Activated B cell treated with CpG ODN at 0.5 μM for 24 hours (primary cell): ENCODE measurements at regions of chr12 and their contacts with region 1.

Region 1: GRCh38 chr12:31874961-31875608 is 84.1 kb upstream of the RESF1 start:
- DNase-seq: peak; percentile 45
- ATAC-seq: peak; percentile 85
- H3K4me3 Mint-ChIP-seq: peak overlapping the region; percentile 77
- H3K27ac Mint-ChIP-seq: peak overlapping the region; percentile 100
- H3K4me1 Mint-ChIP-seq: peaks cover 77% of the 10 kb centered on the region
- H3K27me3 Mint-ChIP-seq: no peaks in the 10 kb centered on the region
- CTCF ChIP-seq: no peak

Region 2: GRCh38 chr12:31804185-31804504 is 70.9 kb before region 1 on chr12:
- CTCF ChIA-PET with region 1: no interaction called
- POLR2A ChIA-PET with region 1: interaction called, 15 read pairs
- intact Hi-C with region 1: no loop called
- DNase-seq: no peak
- ATAC-seq: no peak
- H3K4me3 Mint-ChIP-seq: peak overlapping the region; percentile 78
- H3K27ac Mint-ChIP-seq: peak overlapping the region; percentile 88
- H3K4me1 Mint-ChIP-seq: peaks cover 50% of the 10 kb centered on the region
- H3K27me3 Mint-ChIP-seq: no peaks in the 10 kb centered on the region
- CTCF ChIP-seq: no peak

Region 3: DNA sequence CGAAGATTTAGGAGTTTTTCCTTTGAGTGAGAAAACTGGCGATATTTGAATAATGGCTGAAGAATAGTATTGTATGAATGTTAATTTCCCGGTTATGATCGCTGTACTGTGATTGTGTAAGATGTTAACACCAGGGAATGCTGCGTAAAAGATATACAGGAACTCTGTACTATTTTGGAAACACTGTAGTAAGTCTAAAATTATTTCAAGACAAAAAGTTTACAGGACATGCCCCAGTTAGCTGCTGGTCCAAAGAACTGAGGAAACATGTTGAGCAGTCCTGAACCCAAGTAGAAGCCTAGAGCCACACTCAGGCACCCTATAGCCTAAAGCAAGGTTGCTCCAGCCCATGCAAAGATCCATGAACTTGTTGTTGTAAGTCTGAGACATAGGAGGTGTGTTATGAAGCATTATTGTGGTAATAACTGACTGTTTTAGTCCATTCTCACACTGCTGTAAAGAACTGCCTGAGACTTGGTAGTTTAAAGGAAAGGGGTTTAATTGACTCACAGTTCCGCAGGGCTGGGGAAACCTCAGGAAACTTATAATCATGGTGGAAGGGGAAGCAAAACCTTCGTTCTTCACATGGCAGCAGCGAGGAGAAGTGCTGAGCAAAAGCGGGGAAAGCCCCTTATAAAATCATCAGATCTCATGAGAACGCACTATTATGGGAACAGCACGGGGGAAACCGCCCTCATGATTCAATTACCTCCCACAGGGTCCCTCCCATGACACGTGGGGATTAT is 15.7 kb before region 1 on chr12:
- CTCF ChIA-PET with region 1: no interaction called
- POLR2A ChIA-PET with region 1: interaction called, 19 read pairs
- intact Hi-C with region 1: loop called (anchors 1 kb)
- DNase-seq: peak; percentile 35
- ATAC-seq: peak; percentile 93
- H3K4me3 Mint-ChIP-seq: peak overlapping the region; percentile 61
- H3K27ac Mint-ChIP-seq: peak overlapping the region; percentile 87
- H3K4me1 Mint-ChIP-seq: peaks cover 31% of the 10 kb centered on the region
- H3K27me3 Mint-ChIP-seq: no peaks in the 10 kb centered on the region
- CTCF ChIP-seq: no peak

Region 4: GRCh38 chr12:31890295-31891285 is 15.5 kb after region 1 on chr12:
- CTCF ChIA-PET with region 1: interaction called, 5 read pairs
- POLR2A ChIA-PET with region 1: interaction called, 58 read pairs
- intact Hi-C with region 1: loop called (anchors 1 kb)
- DNase-seq: no peak
- ATAC-seq: peak; percentile 43
- H3K4me3 Mint-ChIP-seq: peak overlapping the region; percentile 45
- H3K27ac Mint-ChIP-seq: peak overlapping the region; percentile 82
- H3K4me1 Mint-ChIP-seq: peaks cover 71% of the 10 kb centered on the region
- H3K27me3 Mint-ChIP-seq: no peaks in the 10 kb centered on the region
- CTCF ChIP-seq: no peak

Region 5: DNA sequence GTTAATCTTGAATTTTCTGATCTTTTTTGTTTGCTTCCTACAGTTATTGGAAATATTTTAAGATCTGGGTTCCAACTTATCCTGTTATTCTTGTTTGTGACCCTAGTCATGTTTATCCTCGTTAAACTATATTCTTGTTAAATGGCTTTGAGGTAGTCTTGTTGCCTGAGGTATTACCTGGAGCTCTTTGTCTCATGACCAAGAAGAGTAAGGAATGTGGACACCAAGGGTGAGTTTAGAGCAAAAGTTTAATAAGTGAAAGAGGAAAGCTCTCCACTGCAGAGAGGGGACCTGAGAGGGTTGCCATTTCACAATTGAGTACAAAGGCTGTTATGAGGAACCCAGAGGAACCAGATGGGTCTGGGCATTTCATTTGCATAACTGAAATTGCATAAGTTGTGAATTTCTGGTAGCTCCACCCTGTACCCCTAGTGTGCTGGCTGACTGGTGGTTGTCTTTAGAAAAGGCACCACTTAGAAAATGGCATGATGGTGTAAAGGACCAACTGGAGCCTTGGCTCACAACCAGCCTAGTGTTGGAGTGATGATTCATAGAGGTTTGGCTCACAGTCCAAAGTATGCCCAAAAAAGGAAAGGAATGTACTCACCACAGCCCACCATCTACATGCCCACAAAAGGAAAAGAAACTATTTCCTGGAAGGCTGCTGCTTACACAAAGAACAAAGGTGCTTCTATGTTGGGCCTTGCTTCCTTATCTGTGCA is 47.4 kb after region 1 on chr12:
- CTCF ChIA-PET with region 1: interaction called, 4 read pairs
- POLR2A ChIA-PET with region 1: interaction called, 14 read pairs
- intact Hi-C with region 1: no loop called
- DNase-seq: no peak
- ATAC-seq: no peak
- H3K4me3 Mint-ChIP-seq: no peak overlapping the region
- H3K27ac Mint-ChIP-seq: no peak overlapping the region
- H3K4me1 Mint-ChIP-seq: no peaks in the 10 kb centered on the region
- H3K27me3 Mint-ChIP-seq: no peaks in the 10 kb centered on the region
- CTCF ChIP-seq: no peak